Left ventricle myocardium inferior (tissue), 1 donor: ENCODE measurements at regions of chr2 and their contacts with region 1.

Region 1: DNA sequence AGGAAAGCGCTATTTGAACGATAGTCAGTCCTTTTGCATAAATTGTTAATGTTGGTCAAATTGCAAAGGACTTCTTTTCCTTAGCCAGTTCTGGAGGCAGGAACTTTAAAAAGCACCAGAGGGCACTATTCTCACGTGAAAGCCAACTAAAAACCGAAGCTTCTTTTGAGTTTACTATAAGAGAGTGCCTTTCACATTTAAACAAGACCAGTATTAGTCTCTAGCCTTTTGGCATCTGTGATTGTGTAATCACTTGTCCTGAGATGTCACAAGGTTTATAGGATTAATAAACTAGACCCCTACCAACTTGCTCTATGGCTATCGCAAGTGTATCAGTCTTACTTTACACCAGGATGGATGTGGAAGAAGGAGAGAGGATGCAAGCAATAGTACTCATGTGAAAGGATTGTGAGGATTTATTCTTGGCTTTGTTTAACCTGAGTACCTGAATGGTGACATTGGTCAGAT is 14.4 kb upstream of the STAT4 start:
- DNase-seq: no peak
- H3K4me3 ChIP-seq: no peak overlapping the region
- H3K27ac ChIP-seq: peak overlapping the region; percentile 65
- H3K4me1 ChIP-seq: peaks cover 24% of the 10 kb centered on the region
- H3K27me3 ChIP-seq: no peaks in the 10 kb centered on the region
- CTCF ChIP-seq: peak; percentile 73

Region 2: DNA sequence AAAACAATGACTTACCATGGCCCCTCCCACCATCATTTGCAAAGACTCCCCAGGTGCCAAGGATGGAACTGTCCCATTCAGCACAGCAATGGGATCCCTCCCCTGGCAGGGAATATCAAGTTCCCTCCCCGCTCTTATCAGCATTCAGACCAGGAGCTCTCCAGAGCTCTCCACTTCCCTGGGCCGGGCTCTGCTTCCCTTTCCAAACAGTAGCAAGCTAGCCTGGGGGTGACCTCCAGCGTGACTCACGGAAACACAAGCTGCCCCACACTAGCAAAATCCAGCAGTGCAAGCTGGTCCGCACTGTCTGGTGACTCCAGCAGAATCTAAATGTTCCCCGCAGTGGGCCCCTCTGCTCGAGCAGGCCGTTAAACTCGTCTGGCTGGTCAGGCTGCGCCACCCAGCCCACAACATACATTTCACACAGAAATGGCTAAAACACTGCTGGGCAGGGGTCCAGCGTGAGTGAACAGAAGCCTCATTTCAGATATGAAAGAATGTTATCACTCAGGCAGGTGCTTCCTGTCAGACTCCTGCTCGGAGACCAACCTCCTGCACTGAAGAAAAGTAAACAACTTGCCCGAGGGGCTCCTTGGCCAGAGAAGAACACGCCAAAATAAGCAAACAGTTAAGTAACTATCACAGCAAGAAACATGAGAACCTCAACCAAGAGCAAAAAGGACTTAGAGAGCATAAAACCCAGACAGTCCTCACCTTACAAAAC is 185.1 kb before region 1 on chr2:
- intact Hi-C with region 1: no loop called
- DNase-seq: peak; percentile 78
- H3K4me3 ChIP-seq: peak overlapping the region; percentile 44
- H3K27ac ChIP-seq: peak overlapping the region; percentile 91
- H3K4me1 ChIP-seq: peaks cover 54% of the 10 kb centered on the region
- H3K27me3 ChIP-seq: no peaks in the 10 kb centered on the region
- CTCF ChIP-seq: no peak

Region 3: GRCh38 chr2:191056228-191056627 is 109.0 kb before region 1 on chr2:
- intact Hi-C with region 1: no loop called
- DNase-seq: no peak
- H3K4me3 ChIP-seq: no peak overlapping the region
- H3K27ac ChIP-seq: no peak overlapping the region
- H3K4me1 ChIP-seq: peaks cover 13% of the 10 kb centered on the region
- H3K27me3 ChIP-seq: peaks cover 11% of the 10 kb centered on the region
- CTCF ChIP-seq: no peak

Region 4: DNA sequence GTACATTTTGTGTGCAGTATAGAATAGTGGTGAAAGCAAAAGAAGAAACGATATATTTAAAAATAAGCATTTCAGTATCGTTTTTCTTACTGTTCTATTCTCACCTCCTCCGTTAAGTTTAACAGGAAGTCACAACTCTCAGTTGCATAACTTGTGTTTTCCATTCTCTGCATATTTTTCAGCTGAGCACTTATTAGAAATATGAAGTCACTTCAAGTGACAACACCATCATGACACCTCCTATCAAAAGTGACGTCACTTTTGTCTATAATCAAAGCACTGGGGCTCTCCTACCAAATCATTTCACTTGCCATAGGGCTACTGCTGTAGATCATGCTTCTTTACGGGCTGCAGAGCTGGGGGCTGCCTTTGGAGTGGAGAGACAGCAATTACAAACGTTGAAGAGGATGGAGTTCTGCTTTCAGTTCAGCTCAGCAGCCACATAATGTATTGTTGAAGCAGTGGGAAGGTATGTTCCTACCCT is 50.8 kb before region 1 on chr2:
- intact Hi-C with region 1: no loop called
- DNase-seq: no peak
- H3K4me3 ChIP-seq: no peak overlapping the region
- H3K27ac ChIP-seq: no peak overlapping the region
- H3K4me1 ChIP-seq: no peaks in the 10 kb centered on the region
- H3K27me3 ChIP-seq: no peaks in the 10 kb centered on the region
- CTCF ChIP-seq: no peak

Region 5: GRCh38 chr2:191436368-191437055 is 271.3 kb after region 1 on chr2:
- intact Hi-C with region 1: no loop called
- DNase-seq: no peak
- H3K4me3 ChIP-seq: no peak overlapping the region
- H3K27ac ChIP-seq: peak overlapping the region; percentile 57
- H3K4me1 ChIP-seq: peaks cover 11% of the 10 kb centered on the region
- H3K27me3 ChIP-seq: no peaks in the 10 kb centered on the region
- CTCF ChIP-seq: no peak

Region 6: GRCh38 chr2:191521608-191522208 is 356.5 kb after region 1 on chr2:
- intact Hi-C with region 1: loop called (anchors 2 kb)
- DNase-seq: no peak
- H3K4me3 ChIP-seq: no peak overlapping the region
- H3K27ac ChIP-seq: no peak overlapping the region
- H3K4me1 ChIP-seq: no peaks in the 10 kb centered on the region
- H3K27me3 ChIP-seq: no peaks in the 10 kb centered on the region
- CTCF ChIP-seq: peak; percentile 92